CD8-positive, alpha-beta T cell (primary cell): ENCODE measurements at regions of chr14 and their contacts with region 1.

Region 1: GRCh38 chr14:60773558-60773957 is 39.0 kb downstream of the MNAT1 start:
- DNase-seq: no peak
- ATAC-seq: no peak
- H3K4me3 ChIP-seq: no peak overlapping the region
- H3K4me3 Mint-ChIP-seq: no peak overlapping the region
- H3K27ac ChIP-seq: no peak overlapping the region
- H3K27ac Mint-ChIP-seq: no peak overlapping the region
- H3K4me1 ChIP-seq: no peaks in the 10 kb centered on the region
- H3K4me1 Mint-ChIP-seq: peaks cover 6% of the 10 kb centered on the region
- H3K27me3 ChIP-seq: no peaks in the 10 kb centered on the region
- H3K27me3 Mint-ChIP-seq: no peaks in the 10 kb centered on the region
- CTCF ChIP-seq: no peak

Region 2: GRCh38 chr14:60753264-60754119 is 20.1 kb before region 1 on chr14:
- CTCF ChIA-PET with region 1: interaction called, 3 read pairs
- POLR2A ChIA-PET with region 1: no interaction called
- intact Hi-C with region 1: loop called in 1 of 2 experiments (anchors 2 kb)
- DNase-seq: peak; percentile 17 to 95 (median 55)
- ATAC-seq: peak; percentile 90
- H3K4me3 ChIP-seq: peak overlapping the region in 1 of 2 experiments; percentile 6
- H3K4me3 Mint-ChIP-seq: peak overlapping the region; percentile 64
- H3K27ac ChIP-seq: peak overlapping the region in 1 of 2 experiments; percentile 48
- H3K27ac Mint-ChIP-seq: peak overlapping the region; percentile 82
- H3K4me1 ChIP-seq: peaks cover 22% of the 10 kb centered on the region
- H3K4me1 Mint-ChIP-seq: peaks cover 38% of the 10 kb centered on the region
- H3K27me3 ChIP-seq: no peaks in the 10 kb centered on the region
- H3K27me3 Mint-ChIP-seq: peaks cover 4% of the 10 kb centered on the region
- CTCF ChIP-seq: no peak